ENCODE measurements at regions of chr19 and their contacts with region 1.

Region 1: GRCh38 chr19:38425810-38426466 is at the start of gene RASGRP4:
- DNase-seq: peak; percentile 66
- ATAC-seq: peak; percentile 76
- H3K4me3 Mint-ChIP-seq: peak within 1 kb of the TSS; percentile 74
- H3K27ac Mint-ChIP-seq: peak within 1 kb of the TSS; percentile 94
- H3K4me1 Mint-ChIP-seq: peaks cover 39% of the 10 kb centered on the region
- H3K27me3 Mint-ChIP-seq: no peaks in the 10 kb centered on the region
- CTCF ChIP-seq: no peak
- total RNA-seq, gene RASGRP4: 3.2 and 3.6 TPM in 2 replicates

Region 2: GRCh38 chr19:37951816-37952210 is 474.1 kb before region 1 on chr19:
- CTCF ChIA-PET with region 1: no interaction called
- POLR2A ChIA-PET with region 1: interaction called, 11 read pairs
- intact Hi-C with region 1: no loop called
- DNase-seq: no peak
- ATAC-seq: no peak
- H3K4me3 Mint-ChIP-seq: peak overlapping the region; percentile 72
- H3K27ac Mint-ChIP-seq: peak overlapping the region; percentile 90
- H3K4me1 Mint-ChIP-seq: peaks cover 86% of the 10 kb centered on the region
- H3K27me3 Mint-ChIP-seq: no peaks in the 10 kb centered on the region
- CTCF ChIP-seq: no peak

Region 3: GRCh38 chr19:38440592-38440991 is 14.7 kb after region 1 on chr19:
- CTCF ChIA-PET with region 1: no interaction called
- POLR2A ChIA-PET with region 1: no interaction called
- intact Hi-C with region 1: no loop called
- DNase-seq: no peak
- ATAC-seq: no peak
- H3K4me3 Mint-ChIP-seq: no peak overlapping the region
- H3K27ac Mint-ChIP-seq: no peak overlapping the region
- H3K4me1 Mint-ChIP-seq: peaks cover 2% of the 10 kb centered on the region
- H3K27me3 Mint-ChIP-seq: peaks cover 16% of the 10 kb centered on the region
- CTCF ChIP-seq: no peak

Region 4: GRCh38 chr19:38452428-38453366 is 26.8 kb after region 1 on chr19:
- CTCF ChIA-PET with region 1: no interaction called
- POLR2A ChIA-PET with region 1: no interaction called
- intact Hi-C with region 1: no loop called
- DNase-seq: no peak
- ATAC-seq: no peak
- H3K4me3 Mint-ChIP-seq: no peak overlapping the region
- H3K27ac Mint-ChIP-seq: no peak overlapping the region
- H3K4me1 Mint-ChIP-seq: no peaks in the 10 kb centered on the region
- H3K27me3 Mint-ChIP-seq: peaks cover 6% of the 10 kb centered on the region
- CTCF ChIP-seq: no peak

Region 5: GRCh38 chr19:38492181-38492813 is 66.4 kb after region 1 on chr19:
- CTCF ChIA-PET with region 1: no interaction called
- POLR2A ChIA-PET with region 1: no interaction called
- intact Hi-C with region 1: loop called (anchors 5 kb)
- DNase-seq: no peak
- ATAC-seq: peak; percentile 50
- H3K4me3 Mint-ChIP-seq: no peak overlapping the region
- H3K27ac Mint-ChIP-seq: no peak overlapping the region
- H3K4me1 Mint-ChIP-seq: peaks cover 16% of the 10 kb centered on the region
- H3K27me3 Mint-ChIP-seq: peaks cover 18% of the 10 kb centered on the region
- CTCF ChIP-seq: no peak